ENCODE measurements at regions of chr17 and their contacts with region 1.

Region 1: DNA sequence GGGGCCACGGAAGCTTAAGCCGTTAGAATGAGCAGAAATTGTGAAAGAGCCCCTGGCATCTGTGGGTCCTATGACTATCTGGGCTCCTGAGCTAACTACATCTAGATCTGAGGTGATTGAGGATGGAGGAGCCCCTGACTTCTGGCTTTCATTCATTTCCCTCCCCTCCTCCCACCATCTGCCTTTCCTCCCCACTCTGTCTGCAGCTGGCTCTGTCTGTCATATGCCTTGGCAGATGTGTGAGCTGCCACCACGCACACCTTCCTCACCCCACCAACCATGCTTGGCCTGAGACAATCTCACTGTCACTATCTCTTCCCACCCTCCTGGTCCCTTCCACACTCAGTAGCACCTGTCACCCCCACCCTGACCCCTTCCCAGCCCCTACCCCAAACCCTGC is 5.1 kb downstream of the CD300E start:
- DNase-seq: no peak
- H3K4me3 Mint-ChIP-seq: no peak overlapping the region
- H3K27ac Mint-ChIP-seq: no peak overlapping the region
- H3K4me1 Mint-ChIP-seq: no peaks in the 10 kb centered on the region
- H3K27me3 Mint-ChIP-seq: peaks cover 90% of the 10 kb centered on the region
- CTCF ChIP-seq: no peak

Region 2: DNA sequence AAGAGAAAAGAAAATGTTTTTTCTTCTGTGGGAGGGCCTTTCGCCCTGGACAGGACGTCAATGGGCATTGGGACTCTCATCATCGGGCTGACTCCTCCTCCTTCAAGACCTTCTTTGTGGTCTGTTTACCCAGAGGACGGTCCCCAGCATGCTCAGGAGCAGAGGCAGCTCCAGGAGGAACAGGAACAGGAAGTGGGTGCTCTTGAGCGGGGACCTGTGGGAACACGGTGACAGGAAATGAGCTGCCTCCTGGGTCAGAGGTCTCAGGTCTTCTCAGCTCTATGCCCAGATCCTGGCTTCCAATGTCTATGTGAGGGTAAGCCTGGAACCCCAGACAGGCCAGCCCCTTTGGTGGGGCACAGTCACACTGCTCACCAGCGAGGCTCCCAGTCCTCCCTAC is 38.6 kb before region 1 on chr17:
- CTCF ChIA-PET with region 1: no interaction called
- intact Hi-C with region 1: no loop called
- DNase-seq: no peak
- H3K4me3 Mint-ChIP-seq: no peak overlapping the region
- H3K27ac Mint-ChIP-seq: no peak overlapping the region
- H3K4me1 Mint-ChIP-seq: peaks cover 7% of the 10 kb centered on the region
- H3K27me3 Mint-ChIP-seq: peaks cover 84% of the 10 kb centered on the region
- CTCF ChIP-seq: no peak

Region 3: GRCh38 chr17:75205037-75205792 is 586.8 kb after region 1 on chr17 and contains the start of gene NUP85:
- CTCF ChIA-PET with region 1: interaction called, 10 read pairs
- intact Hi-C with region 1: no loop called
- DNase-seq: peak; percentile 96
- H3K4me3 Mint-ChIP-seq: peak within 1 kb of the TSS; percentile 89
- H3K27ac Mint-ChIP-seq: peak within 1 kb of the TSS; percentile 99
- H3K4me1 Mint-ChIP-seq: peaks cover 7% of the 10 kb centered on the region
- H3K27me3 Mint-ChIP-seq: no peaks in the 10 kb centered on the region
- CTCF ChIP-seq: no peak
- total RNA-seq, gene NUP85: 116 and 117 TPM in 2 replicates

Region 4: GRCh38 chr17:75219815-75220214 is 601.4 kb after region 1 on chr17:
- CTCF ChIA-PET with region 1: no interaction called
- intact Hi-C with region 1: no loop called
- DNase-seq: no peak
- H3K4me3 Mint-ChIP-seq: no peak overlapping the region
- H3K27ac Mint-ChIP-seq: no peak overlapping the region
- H3K4me1 Mint-ChIP-seq: no peaks in the 10 kb centered on the region
- H3K27me3 Mint-ChIP-seq: no peaks in the 10 kb centered on the region
- CTCF ChIP-seq: no peak